Naive thymus-derived CD4-positive, alpha-beta T cell (primary cell): ENCODE measurements at regions of chr14 and their contacts with region 1.

Region 1: DNA sequence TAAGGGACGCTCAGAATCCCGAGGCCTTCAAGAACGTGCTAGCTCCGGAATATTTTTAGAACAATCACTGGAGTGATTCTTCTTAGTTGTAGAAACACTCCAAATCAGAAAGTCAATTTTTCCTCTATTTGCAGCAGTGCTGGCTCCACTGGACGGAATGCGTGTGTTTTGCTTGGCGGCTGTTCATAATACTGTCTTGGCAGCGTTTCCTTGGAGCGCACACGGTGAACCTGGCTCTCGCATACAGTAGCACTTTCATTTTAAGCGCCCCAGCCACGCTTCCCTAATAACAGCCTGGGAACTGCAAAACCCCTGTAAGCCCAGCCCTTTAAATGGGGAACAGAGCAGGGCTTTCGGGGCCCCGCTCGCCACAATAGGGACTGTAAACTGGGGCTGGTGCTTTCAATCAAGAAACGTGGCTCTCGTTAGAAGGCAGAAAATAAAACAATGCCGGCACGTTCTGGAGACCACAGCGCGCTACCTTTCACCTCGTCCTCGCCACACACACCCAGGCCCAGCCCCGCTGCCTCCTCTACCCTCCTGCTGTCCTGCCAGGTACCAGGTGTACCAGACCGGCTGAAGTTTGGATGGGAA is 79.9 kb downstream of the BCL11B start:
- DNase-seq: peak in 3 of 9 donors; percentile 45 to 64 (median 49)
- ATAC-seq: peak; percentile 28
- H3K4me3 ChIP-seq: peak overlapping the region; percentile 61
- H3K4me3 Mint-ChIP-seq: peak overlapping the region; percentile 85 to 94 (median 90)
- H3K27ac ChIP-seq: peak overlapping the region; percentile 85
- H3K27ac Mint-ChIP-seq: peak overlapping the region; percentile 93 to 100 (median 98)
- H3K4me1 ChIP-seq: peaks cover 84 to 85% of the 10 kb centered on the region in 2 donors
- H3K4me1 Mint-ChIP-seq: peaks cover 55 to 97% (median 93%) of the 10 kb centered on the region in 7 donors
- H3K27me3 ChIP-seq: no peaks in the 10 kb centered on the region
- H3K27me3 Mint-ChIP-seq: no peaks in the 10 kb centered on the region

Region 2: GRCh38 chr14:98173305-98173704 is 1018.8 kb before region 1 on chr14:
- CTCF ChIA-PET with region 1: interaction called, 3 read pairs
- POLR2A ChIA-PET with region 1: interaction called, 3 read pairs
- intact Hi-C with region 1: loop called in 1 of 2 experiments (anchors 5 kb)
- DNase-seq: peak in 7 of 9 donors; percentile 71 to 84 (median 82)
- ATAC-seq: peak; percentile 78
- H3K4me3 ChIP-seq: peak overlapping the region; percentile 33
- H3K4me3 Mint-ChIP-seq: peak overlapping the region; percentile 74 to 90 (median 84)
- H3K27ac ChIP-seq: peak overlapping the region; percentile 81
- H3K27ac Mint-ChIP-seq: peak overlapping the region; percentile 89 to 100 (median 97)
- H3K4me1 ChIP-seq: peaks cover 100% of the 10 kb centered on the region in 2 donors
- H3K4me1 Mint-ChIP-seq: peaks cover 59 to 100% (median 99%) of the 10 kb centered on the region in 7 donors
- H3K27me3 ChIP-seq: no peaks in the 10 kb centered on the region
- H3K27me3 Mint-ChIP-seq: no peaks in the 10 kb centered on the region

Region 3: DNA sequence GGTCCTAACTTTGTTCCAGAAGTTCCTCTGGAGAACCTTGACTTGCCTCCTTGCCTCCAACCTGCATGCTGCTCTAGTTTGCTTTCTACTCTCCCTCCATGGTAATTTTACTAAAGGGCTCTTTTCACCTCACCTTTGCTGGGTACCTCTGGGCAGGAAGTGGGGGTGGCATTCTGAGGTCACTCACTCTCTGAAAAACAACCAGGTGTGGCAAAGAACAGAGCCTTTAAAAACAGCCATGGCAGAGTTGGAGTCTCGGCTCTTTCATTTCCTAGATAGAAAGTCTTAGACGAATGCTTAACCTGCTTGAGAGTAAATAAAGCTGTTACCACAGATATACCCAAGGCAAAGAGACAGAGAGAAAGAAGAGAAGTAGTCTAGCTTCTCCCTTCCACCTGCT is 748.0 kb before region 1 on chr14:
- CTCF ChIA-PET with region 1: no interaction called
- POLR2A ChIA-PET with region 1: no interaction called
- intact Hi-C with region 1: loop called in 1 of 2 experiments (anchors 5 kb)
- DNase-seq: peak in 7 of 9 donors; percentile 61 to 90 (median 86)
- ATAC-seq: peak; percentile 97
- H3K4me3 ChIP-seq: peak overlapping the region; percentile 26
- H3K4me3 Mint-ChIP-seq: peak overlapping the region; percentile 15 to 93 (median 81)
- H3K27ac ChIP-seq: peak overlapping the region; percentile 63
- H3K27ac Mint-ChIP-seq: peak overlapping the region in 6 of 9 donors; percentile 70 to 100 (median 100)
- H3K4me1 ChIP-seq: peaks cover 17 to 43% of the 10 kb centered on the region in 2 donors
- H3K4me1 Mint-ChIP-seq: peaks cover 0 to 54% (median 32%) of the 10 kb centered on the region in 7 donors
- H3K27me3 ChIP-seq: no peaks in the 10 kb centered on the region
- H3K27me3 Mint-ChIP-seq: no peaks in the 10 kb centered on the region

Region 4: GRCh38 chr14:98858158-98858557 is 334.0 kb before region 1 on chr14:
- CTCF ChIA-PET with region 1: no interaction called
- POLR2A ChIA-PET with region 1: no interaction called
- intact Hi-C with region 1: no loop called
- DNase-seq: no peak
- ATAC-seq: no peak
- H3K4me3 ChIP-seq: no peak overlapping the region
- H3K4me3 Mint-ChIP-seq: no peak overlapping the region
- H3K27ac ChIP-seq: no peak overlapping the region
- H3K27ac Mint-ChIP-seq: peak overlapping the region in 1 of 9 donors; percentile 28
- H3K4me1 ChIP-seq: no peaks in the 10 kb centered on the region
- H3K4me1 Mint-ChIP-seq: peaks cover 0 to 14% (median 0%) of the 10 kb centered on the region in 7 donors
- H3K27me3 ChIP-seq: no peaks in the 10 kb centered on the region
- H3K27me3 Mint-ChIP-seq: peaks cover 0 to 19% (median 5%) of the 10 kb centered on the region in 5 donors

Region 5: GRCh38 chr14:99177886-99178835 is 14.0 kb before region 1 on chr14:
- CTCF ChIA-PET with region 1: interaction called, 7 read pairs
- POLR2A ChIA-PET with region 1: interaction called, 37 read pairs
- intact Hi-C with region 1: loop called in 1 of 2 experiments (anchors 1 kb)
- DNase-seq: no peak
- ATAC-seq: no peak
- H3K4me3 ChIP-seq: no peak overlapping the region
- H3K4me3 Mint-ChIP-seq: peak overlapping the region; percentile 47 to 94 (median 68)
- H3K27ac ChIP-seq: peak overlapping the region; percentile 85
- H3K27ac Mint-ChIP-seq: peak overlapping the region; percentile 84 to 100 (median 94)
- H3K4me1 ChIP-seq: peaks cover 38 to 57% of the 10 kb centered on the region in 2 donors
- H3K4me1 Mint-ChIP-seq: peaks cover 39 to 79% (median 64%) of the 10 kb centered on the region in 7 donors
- H3K27me3 ChIP-seq: no peaks in the 10 kb centered on the region
- H3K27me3 Mint-ChIP-seq: no peaks in the 10 kb centered on the region